Naive thymus-derived CD4-positive, alpha-beta T cell (primary cell): ENCODE measurements at regions of chr1 and their contacts with region 1.

Region 1: DNA sequence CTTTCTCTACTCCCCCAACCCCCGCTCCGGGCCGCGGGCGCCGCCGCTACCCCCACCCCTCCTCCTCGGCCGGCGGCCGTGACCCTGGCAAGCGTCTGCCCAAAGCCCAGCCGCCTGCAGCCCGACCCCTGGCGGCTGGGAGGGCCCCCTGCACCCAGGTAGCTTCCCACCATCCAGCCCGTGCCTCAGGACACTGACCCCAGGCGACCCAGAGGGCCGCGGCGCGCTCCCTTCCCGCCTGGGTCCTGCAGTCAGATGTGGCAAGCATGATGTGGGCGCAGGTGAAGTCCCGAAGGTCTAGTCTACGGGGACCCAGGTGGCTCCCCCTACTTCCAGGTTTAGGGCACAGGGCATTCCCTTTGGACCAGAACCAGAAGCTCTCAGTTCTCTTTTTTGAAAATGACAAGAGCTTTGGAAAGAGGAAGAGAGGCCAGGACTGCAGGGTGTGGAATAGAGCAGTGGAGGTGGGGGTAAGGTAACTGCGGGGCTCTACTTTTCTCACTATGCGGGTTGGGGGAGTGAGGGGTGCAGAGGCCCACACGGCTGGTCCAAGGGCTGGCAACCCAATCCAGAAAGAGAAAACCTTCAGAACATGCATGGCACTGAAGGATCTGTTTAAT is at the start of gene DENND4B:
- DNase-seq: peak; percentile 55 to 85 (median 68)
- ATAC-seq: peak; percentile 75
- H3K4me3 ChIP-seq: peak within 1 kb of the TSS; percentile 94
- H3K4me3 Mint-ChIP-seq: peak within 1 kb of the TSS; percentile 93 to 99 (median 96)
- H3K27ac ChIP-seq: peak within 1 kb of the TSS; percentile 89
- H3K27ac Mint-ChIP-seq: peak within 1 kb of the TSS; percentile 90 to 98 (median 96)
- H3K4me1 ChIP-seq: peaks cover 23 to 25% of the 10 kb centered on the region in 2 donors
- H3K4me1 Mint-ChIP-seq: peaks cover 20 to 44% (median 39%) of the 10 kb centered on the region in 7 donors
- H3K27me3 ChIP-seq: no peaks in the 10 kb centered on the region
- H3K27me3 Mint-ChIP-seq: no peaks in the 10 kb centered on the region
- total RNA-seq, gene DENND4B: 148 to 223 (median 197) TPM

Region 2: DNA sequence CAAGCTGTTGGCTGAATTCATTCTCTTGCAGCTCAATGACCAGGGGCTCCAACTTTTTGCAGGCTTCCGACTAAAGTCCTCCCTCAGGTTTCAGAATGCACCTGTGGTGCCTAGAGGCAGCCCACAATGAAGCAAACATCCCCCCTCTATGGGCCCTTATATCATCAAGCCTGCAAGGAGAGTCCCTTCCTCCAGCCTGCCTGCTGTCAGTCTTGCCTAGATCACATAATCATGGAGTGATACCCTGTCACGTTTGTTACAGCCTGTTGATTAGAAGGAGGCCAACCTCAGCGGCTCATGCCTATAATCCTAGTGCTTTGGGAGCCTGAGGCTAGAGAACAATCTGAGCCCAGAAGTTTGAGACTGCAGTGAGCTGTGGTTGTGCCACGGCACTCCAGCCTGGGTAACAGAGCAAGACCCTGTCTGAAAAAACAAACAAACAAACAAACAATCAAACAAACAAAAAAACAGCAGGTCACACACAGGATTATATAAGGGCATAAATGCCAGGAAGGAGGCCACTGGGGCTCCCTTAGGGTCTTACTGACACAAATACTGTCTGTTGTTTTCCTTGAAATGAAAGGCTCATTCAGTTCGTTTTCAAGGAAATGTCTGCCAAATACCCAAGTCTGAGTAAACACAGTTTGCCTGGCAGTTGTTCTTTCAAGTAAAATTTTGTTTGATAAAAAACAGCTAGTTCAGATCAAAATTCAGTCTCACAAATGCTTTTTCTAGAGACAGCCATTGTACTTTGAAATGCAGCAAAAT is 949.9 kb before region 1 on chr1:
- CTCF ChIA-PET with region 1: no interaction called
- POLR2A ChIA-PET with region 1: no interaction called
- intact Hi-C with region 1: no loop called
- DNase-seq: no peak
- ATAC-seq: no peak
- H3K4me3 ChIP-seq: no peak overlapping the region
- H3K4me3 Mint-ChIP-seq: no peak overlapping the region
- H3K27ac ChIP-seq: no peak overlapping the region
- H3K27ac Mint-ChIP-seq: no peak overlapping the region
- H3K4me1 ChIP-seq: no peaks in the 10 kb centered on the region
- H3K4me1 Mint-ChIP-seq: no peaks in the 10 kb centered on the region
- H3K27me3 ChIP-seq: no peaks in the 10 kb centered on the region
- H3K27me3 Mint-ChIP-seq: peaks cover 17 to 25% (median 23%) of the 10 kb centered on the region in 5 donors

Region 3: DNA sequence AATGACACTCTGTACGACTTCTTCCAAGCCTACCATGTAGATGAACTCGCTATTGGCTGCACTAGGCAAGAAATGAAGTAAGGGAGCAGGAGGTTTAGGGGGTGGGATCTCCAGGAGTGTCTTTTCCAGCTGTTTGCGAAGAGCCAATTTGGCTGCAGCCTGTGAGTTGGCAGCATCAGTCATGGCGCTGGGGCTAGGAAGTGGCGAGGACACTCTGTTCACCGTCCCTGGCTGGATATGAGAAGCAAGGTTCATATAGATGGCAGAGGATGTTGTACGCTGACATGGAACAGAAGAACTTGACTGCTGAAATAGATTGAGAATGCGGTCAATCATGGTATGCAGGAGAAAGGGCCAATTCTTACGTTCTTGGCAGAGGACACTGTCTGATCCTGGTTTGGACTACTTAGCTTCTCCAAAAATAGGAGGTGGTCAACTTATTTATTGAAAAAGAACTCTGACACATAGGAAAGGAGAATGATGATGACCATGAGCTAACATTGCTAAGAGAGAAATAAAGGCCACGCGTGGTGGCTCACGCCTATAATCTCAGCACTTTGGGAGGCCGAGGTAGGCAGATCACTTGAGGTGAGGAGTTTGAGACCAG is 130.3 kb before region 1 on chr1:
- CTCF ChIA-PET with region 1: no interaction called
- POLR2A ChIA-PET with region 1: interaction called, 3 read pairs
- intact Hi-C with region 1: loop called (anchors 1 to 2 kb)
- DNase-seq: no peak
- ATAC-seq: no peak
- H3K4me3 ChIP-seq: no peak overlapping the region
- H3K4me3 Mint-ChIP-seq: no peak overlapping the region
- H3K27ac ChIP-seq: no peak overlapping the region
- H3K27ac Mint-ChIP-seq: peak overlapping the region in 2 of 9 donors; percentile 19 to 26
- H3K4me1 ChIP-seq: no peaks in the 10 kb centered on the region
- H3K4me1 Mint-ChIP-seq: peaks cover 0 to 5% (median 2%) of the 10 kb centered on the region in 7 donors
- H3K27me3 ChIP-seq: no peaks in the 10 kb centered on the region
- H3K27me3 Mint-ChIP-seq: no peaks in the 10 kb centered on the region

Region 4: GRCh38 chr1:153936011-153936802 is 10.5 kb before region 1 on chr1:
- CTCF ChIA-PET with region 1: interaction called, 3 read pairs
- POLR2A ChIA-PET with region 1: interaction called, 10 read pairs
- intact Hi-C with region 1: no loop called
- DNase-seq: no peak
- ATAC-seq: no peak
- H3K4me3 ChIP-seq: no peak overlapping the region
- H3K4me3 Mint-ChIP-seq: no peak overlapping the region
- H3K27ac ChIP-seq: no peak overlapping the region
- H3K27ac Mint-ChIP-seq: peak overlapping the region in 3 of 9 donors; percentile 12 to 75 (median 65)
- H3K4me1 ChIP-seq: no peaks in the 10 kb centered on the region
- H3K4me1 Mint-ChIP-seq: peaks cover 5 to 21% (median 10%) of the 10 kb centered on the region in 7 donors
- H3K27me3 ChIP-seq: no peaks in the 10 kb centered on the region
- H3K27me3 Mint-ChIP-seq: no peaks in the 10 kb centered on the region

Region 5: GRCh38 chr1:153967082-153968000 is 20.6 kb after region 1 on chr1 and contains the start of gene CREB3L4:
- CTCF ChIA-PET with region 1: interaction called, 11 read pairs
- POLR2A ChIA-PET with region 1: interaction called, 159 read pairs
- intact Hi-C with region 1: loop called in 1 of 2 experiments (anchors 1 kb)
- DNase-seq: peak; percentile 68 to 89 (median 84)
- ATAC-seq: peak; percentile 91
- H3K4me3 ChIP-seq: peak within 1 kb of the TSS; percentile 89
- H3K4me3 Mint-ChIP-seq: peak within 1 kb of the TSS; percentile 83 to 97 (median 92)
- H3K27ac ChIP-seq: peak within 1 kb of the TSS; percentile 79
- H3K27ac Mint-ChIP-seq: peak within 1 kb of the TSS; percentile 87 to 99 (median 94)
- H3K4me1 ChIP-seq: peaks cover 32 to 40% of the 10 kb centered on the region in 2 donors
- H3K4me1 Mint-ChIP-seq: peaks cover 27 to 72% (median 57%) of the 10 kb centered on the region in 7 donors
- H3K27me3 ChIP-seq: no peaks in the 10 kb centered on the region
- H3K27me3 Mint-ChIP-seq: no peaks in the 10 kb centered on the region
- total RNA-seq, gene CREB3L4: 4.6 to 8.4 (median 7.0) TPM